Activated naive CD4-positive, alpha-beta T cell treated with anti-CD3 and anti-CD28 coated beads, Interleukin-2, amount 10 ng/mL, durations not matched to agents 7 days and 5 days (primary cell): ENCODE measurements at regions of chr10 and their contacts with region 1.

Region 1: DNA sequence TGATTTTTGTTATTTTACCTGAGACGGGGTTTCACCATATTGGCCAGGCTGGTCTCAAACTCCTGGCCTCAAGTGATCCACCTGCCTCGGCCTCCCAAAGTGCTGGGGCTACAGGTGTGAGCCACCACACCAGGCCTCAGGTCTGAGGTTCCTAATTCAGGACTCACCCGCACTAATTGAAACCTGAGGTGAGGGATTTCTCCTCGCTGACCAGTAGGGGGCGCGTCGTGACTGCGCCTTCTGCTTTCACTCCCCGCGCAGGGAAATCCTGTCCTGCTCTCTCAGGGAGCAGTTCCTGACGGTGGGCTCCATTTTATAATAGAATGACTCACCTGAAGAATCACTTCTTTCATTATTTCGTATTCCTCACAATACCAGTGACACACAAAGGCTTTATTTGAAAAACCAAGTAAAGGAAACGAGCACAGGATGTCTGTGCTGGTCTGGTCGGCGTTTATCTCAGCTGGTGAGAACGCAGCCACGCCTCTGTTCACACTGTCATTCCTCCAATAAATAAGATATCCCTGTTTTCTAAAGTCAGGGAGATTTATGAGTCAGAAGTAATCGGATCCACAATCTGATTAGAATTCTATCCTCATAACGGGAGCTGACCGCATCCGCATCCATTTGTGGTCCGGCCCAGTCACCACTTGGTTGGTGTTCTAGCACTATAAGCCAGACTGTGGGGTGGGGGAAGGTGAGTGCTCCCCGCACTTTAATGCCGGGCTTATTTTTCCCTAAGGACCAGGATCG is 35.4 kb downstream of the BAG3 start:
- DNase-seq: peak; percentile 81
- H3K4me3 Mint-ChIP-seq: no peak overlapping the region
- H3K27ac Mint-ChIP-seq: peak overlapping the region; percentile 63
- H3K4me1 Mint-ChIP-seq: peaks cover 17% of the 10 kb centered on the region
- H3K27me3 Mint-ChIP-seq: peaks cover 17% of the 10 kb centered on the region

Region 2: DNA sequence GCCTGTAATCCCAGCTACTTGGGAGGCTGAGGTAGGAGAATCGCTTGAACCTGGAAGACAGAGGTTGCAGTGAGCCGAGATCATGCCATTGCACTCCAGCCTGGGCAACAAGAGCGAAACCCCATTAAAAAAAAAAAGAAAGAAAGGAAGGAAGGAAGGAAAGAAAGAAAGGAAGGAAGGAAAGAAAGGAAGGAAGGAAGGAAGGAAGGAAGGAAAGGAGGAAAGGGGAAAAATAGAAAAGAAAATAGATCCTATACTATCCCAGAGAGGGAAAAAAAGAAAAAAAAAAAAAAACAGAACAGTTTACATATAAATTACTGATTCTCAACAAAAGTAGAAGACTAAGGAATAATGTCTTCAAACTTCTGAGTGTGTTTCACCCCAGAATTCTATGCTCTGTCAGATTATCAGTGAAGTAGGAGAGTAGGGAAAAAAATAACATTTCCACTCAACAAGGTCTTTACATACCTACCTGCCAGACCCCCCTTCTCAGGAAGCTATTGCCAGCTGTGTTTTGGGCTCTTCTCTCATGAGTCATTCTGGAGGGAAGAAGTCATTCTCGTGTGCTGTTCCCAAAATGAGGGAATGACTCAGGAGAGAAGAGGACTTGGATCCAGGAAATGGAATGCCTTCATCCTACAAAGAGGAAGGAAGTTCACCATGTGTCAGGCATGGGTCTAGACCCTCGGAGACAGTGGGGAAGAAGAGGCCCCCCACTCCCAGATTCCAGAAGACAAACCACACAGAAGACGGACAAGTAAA is 165.0 kb before region 1 on chr10:
- CTCF ChIA-PET with region 1: no interaction called
- DNase-seq: no peak
- H3K4me3 Mint-ChIP-seq: no peak overlapping the region
- H3K27ac Mint-ChIP-seq: no peak overlapping the region
- H3K4me1 Mint-ChIP-seq: peaks cover 49% of the 10 kb centered on the region
- H3K27me3 Mint-ChIP-seq: no peaks in the 10 kb centered on the region

Region 3: GRCh38 chr10:119575506-119575905 is 111.1 kb before region 1 on chr10:
- CTCF ChIA-PET with region 1: no interaction called
- DNase-seq: peak; percentile 48
- H3K4me3 Mint-ChIP-seq: no peak overlapping the region
- H3K27ac Mint-ChIP-seq: peak overlapping the region; percentile 66
- H3K4me1 Mint-ChIP-seq: peaks cover 25% of the 10 kb centered on the region
- H3K27me3 Mint-ChIP-seq: no peaks in the 10 kb centered on the region

Region 4: DNA sequence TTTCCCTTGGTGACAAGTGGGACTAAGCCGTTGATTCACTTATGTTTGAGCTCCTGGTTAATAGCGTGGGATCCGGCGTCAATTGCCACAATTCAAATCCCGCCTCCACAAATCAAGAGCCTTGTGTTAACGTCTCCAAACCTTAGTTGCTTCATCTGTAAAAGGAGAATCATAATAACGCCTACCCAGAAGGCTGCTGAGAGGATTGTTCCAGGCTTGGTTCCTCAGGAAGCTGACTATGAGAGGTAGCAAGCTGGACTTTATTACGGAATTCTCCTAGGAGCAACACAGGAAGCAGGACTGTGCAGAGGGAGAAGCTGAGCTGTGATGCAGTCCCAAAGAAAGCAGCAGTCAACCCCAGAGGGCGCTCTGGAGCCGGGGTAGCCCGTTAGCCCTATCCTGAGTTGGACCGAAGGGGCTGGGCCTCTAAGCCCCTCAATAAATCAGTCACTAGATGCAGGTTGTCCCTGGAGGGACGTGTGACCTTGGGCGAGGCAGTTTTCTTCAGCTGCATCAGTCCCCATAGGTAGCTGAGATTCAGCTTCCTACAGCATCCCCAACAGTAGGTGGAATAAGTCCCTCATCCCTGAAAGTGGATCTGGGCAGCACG is 42.3 kb before region 1 on chr10:
- CTCF ChIA-PET with region 1: no interaction called
- DNase-seq: no peak
- H3K4me3 Mint-ChIP-seq: no peak overlapping the region
- H3K27ac Mint-ChIP-seq: no peak overlapping the region
- H3K4me1 Mint-ChIP-seq: peaks cover 24% of the 10 kb centered on the region
- H3K27me3 Mint-ChIP-seq: peaks cover 8% of the 10 kb centered on the region

Region 5: DNA sequence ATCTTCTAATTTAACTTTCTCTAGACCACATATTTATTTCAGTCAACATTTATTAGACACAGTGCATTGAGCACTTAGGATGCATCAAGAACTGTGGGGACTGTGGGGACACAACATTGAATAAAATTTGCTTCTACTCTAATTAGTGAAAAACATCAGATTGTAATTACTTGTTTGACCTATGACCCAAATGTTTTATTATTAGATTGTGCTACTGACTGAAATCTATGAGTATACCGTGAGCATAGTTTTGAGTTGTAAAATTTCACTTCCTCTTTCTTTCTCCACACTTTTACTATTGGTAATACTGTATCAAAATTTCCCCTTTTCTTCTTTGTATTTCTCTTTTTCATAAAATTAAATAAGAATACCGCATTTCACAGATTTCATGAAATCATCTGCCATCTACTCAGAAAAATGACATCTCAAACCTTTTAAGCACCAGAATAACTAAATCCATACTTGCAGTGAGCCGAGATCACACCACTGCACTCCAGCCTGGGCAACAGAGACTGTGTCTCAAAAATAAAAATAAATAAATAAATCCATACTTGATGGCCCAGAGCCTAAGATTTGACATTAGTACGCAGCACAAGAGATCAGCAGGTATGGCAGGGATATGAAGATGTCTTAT is 13.8 kb after region 1 on chr10:
- CTCF ChIA-PET with region 1: interaction called, 30 read pairs
- DNase-seq: no peak
- H3K4me3 Mint-ChIP-seq: no peak overlapping the region
- H3K27ac Mint-ChIP-seq: no peak overlapping the region
- H3K4me1 Mint-ChIP-seq: peaks cover 23% of the 10 kb centered on the region
- H3K27me3 Mint-ChIP-seq: no peaks in the 10 kb centered on the region

Region 6: DNA sequence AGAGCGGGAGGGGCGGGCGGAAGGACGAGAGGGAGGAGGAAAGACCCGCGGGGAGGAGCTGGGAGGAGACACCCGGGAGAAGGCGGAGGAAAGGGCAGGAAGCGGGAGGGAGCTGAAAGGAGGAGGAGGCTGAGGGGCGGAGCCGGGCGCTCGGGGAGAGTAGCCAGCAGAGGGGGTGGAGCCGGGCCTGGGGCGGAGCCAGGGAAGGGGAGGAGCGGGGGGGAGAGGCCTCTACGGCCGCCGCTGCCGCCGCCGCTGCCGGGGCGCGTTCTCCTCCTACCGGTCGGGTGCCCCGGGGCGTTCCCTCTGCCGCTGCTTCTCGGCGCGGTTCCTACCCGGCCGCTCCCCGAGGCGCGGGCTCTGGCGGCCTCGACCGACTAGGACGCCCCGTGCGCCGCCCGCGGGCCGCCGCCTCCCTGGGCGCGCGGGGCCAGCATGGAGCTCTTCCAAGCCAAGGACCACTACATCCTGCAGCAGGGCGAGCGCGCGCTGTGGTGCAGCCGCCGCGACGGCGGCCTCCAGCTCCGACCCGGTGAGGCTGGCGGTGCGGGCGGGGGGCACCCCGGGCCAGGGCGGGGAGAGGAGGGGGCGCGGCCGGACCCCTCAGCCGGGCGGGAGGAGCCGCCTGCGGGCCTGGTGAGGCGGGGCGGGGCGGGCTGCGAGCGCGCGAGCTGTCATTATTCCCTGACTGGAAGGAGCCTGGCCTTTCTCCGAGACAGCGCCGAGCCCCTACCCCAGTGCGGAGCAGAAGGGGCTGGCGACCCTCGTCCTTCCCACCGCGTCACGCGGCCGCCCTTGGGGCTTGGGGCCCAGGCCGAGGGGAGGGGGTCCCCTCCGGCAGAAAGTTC is 39.4 kb after region 1 on chr10 and contains the start of gene INPP5F:
- CTCF ChIA-PET with region 1: interaction called, 14 read pairs
- DNase-seq: peak; percentile 100
- H3K4me3 Mint-ChIP-seq: peak within 1 kb of the TSS; percentile 87
- H3K27ac Mint-ChIP-seq: peak within 1 kb of the TSS; percentile 78
- H3K4me1 Mint-ChIP-seq: peaks cover 49% of the 10 kb centered on the region
- H3K27me3 Mint-ChIP-seq: no peaks in the 10 kb centered on the region

Region 7: DNA sequence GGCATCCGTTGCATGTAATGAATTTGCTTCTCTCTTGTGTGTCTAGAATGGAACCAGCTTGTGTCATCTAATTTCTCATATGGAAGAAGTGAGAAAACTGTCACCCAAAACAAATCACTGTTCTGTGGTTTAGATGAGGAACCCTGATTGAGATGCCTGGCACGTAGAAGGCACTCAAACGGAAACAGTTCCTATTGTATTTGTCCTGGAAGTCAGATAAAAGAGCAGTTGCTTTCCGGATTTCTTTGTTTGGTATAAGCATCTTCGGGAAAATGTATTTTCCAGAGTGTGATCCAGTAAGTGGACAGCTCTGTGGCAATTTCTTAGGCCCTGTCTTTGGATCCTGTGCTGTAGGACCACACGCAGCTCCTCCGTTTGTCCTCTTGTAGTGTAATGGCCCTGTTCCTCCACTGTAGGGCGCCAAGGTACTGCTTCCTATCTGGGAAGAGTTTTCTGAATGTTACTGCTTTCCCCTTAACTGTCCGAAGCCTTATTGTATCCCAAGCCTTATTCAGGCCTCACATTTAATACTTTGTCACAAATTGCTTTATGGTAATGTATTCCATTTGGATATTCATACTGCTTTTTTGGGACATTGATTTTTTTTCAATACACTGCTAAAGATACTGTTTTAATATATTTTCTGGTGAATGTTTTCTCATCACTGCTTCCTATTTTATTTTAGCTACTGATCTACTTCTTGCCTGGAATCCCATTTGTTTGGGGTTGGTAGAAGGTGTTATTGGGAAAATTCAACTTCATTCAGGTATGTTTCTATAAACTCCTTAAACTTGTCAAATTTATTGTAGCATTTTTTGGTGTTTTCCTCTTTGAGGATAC is 64.0 kb after region 1 on chr10:
- CTCF ChIA-PET with region 1: interaction called, 59 read pairs
- DNase-seq: peak; percentile 72
- H3K4me3 Mint-ChIP-seq: no peak overlapping the region
- H3K27ac Mint-ChIP-seq: no peak overlapping the region
- H3K4me1 Mint-ChIP-seq: peaks cover 2% of the 10 kb centered on the region
- H3K27me3 Mint-ChIP-seq: no peaks in the 10 kb centered on the region

Region 8: GRCh38 chr10:119859420-119860258 is 173.0 kb after region 1 on chr10:
- CTCF ChIA-PET with region 1: interaction called, 72 read pairs
- DNase-seq: no peak
- H3K4me3 Mint-ChIP-seq: no peak overlapping the region
- H3K27ac Mint-ChIP-seq: no peak overlapping the region
- H3K4me1 Mint-ChIP-seq: peaks cover 32% of the 10 kb centered on the region
- H3K27me3 Mint-ChIP-seq: no peaks in the 10 kb centered on the region

Region 9: DNA sequence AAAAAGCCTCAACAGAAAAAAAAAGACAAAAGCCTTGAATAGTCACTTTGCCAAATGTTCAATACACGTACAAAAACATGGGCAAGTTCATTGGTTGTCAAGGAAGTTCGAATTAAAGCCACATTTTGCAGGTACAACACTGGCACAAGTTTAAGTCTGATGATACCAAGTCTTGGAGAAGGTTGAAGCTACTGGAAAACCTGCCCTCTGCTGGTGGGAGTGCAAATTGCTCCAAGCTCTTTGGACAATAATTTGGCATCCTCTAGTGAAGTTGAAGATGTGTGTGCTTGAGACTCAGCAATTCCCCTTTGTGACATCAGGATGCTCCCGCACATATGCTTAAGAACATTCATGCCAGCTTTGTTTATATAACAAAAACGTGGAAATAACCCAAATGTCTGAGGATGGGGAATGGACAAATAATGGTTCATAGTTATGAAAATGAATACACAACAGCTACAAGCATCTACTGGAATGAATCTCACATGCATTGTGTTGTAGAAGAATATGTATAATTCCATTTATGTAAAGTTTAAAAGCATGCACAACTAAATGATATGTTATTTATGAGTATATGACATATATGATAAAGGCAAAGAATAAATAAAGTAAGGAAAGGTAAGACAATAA is 650.4 kb after region 1 on chr10:
- CTCF ChIA-PET with region 1: interaction called, 13 read pairs
- DNase-seq: peak; percentile 65
- H3K4me3 Mint-ChIP-seq: no peak overlapping the region
- H3K27ac Mint-ChIP-seq: no peak overlapping the region
- H3K4me1 Mint-ChIP-seq: no peaks in the 10 kb centered on the region
- H3K27me3 Mint-ChIP-seq: no peaks in the 10 kb centered on the region